Activated CD4-positive, alpha-beta T cell treated with anti-CD3 and anti-CD28 coated beads, Interleukin-2, amount 10 ng/mL, durations not matched to agents 24 days and 14 days (primary cell): ENCODE measurements at regions of chr6 and their contacts with region 1.

Region 1: GRCh38 chr6:1609648-1610496 is at the start of gene FOXC1:
- DNase-seq: peak; percentile 83
- H3K4me3 Mint-ChIP-seq: peak within 1 kb of the TSS; percentile 75
- H3K27ac Mint-ChIP-seq: peak within 1 kb of the TSS; percentile 80
- H3K4me1 Mint-ChIP-seq: peaks cover 23% of the 10 kb centered on the region
- H3K27me3 Mint-ChIP-seq: peaks cover 62% of the 10 kb centered on the region
- total RNA-seq, gene FOXC1: 0.07 TPM in 2 replicates

Region 2: GRCh38 chr6:1311400-1312202 is 298.3 kb before region 1 on chr6 and contains the start of gene FOXQ1:
- intact Hi-C with region 1: loop called (anchors 5 kb)
- DNase-seq: peak; percentile 64
- H3K4me3 Mint-ChIP-seq: peak within 1 kb of the TSS; percentile 62
- H3K27ac Mint-ChIP-seq: peak within 1 kb of the TSS; percentile 82
- H3K4me1 Mint-ChIP-seq: peaks cover 14% of the 10 kb centered on the region
- H3K27me3 Mint-ChIP-seq: peaks cover 73% of the 10 kb centered on the region
- total RNA-seq, gene FOXQ1: not detected in 2 replicates

Region 3: DNA sequence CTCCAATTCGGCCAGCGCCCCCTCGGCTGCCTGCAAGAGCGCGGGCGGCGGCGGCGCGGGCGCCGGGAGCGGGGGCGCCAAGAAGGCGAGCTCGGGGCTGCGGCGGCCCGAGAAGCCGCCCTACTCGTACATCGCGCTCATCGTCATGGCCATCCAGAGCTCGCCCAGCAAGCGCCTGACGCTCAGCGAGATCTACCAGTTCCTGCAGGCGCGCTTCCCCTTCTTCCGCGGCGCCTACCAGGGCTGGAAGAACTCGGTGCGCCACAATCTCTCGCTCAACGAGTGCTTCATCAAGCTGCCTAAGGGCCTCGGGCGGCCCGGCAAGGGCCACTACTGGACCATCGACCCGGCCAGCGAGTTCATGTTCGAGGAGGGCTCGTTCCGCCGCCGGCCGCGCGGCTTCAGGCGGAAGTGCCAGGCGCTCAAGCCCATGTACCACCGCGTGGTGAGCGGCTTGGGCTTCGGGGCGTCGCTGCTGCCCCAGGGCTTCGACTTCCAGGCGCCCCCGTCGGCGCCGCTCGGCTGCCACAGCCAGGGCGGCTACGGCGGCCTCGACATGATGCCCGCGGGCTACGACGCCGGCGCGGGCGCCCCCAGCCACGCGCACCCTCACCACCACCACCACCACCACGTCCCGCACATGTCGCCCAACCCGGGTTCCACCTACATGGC is 219.6 kb before region 1 on chr6:
- intact Hi-C with region 1: loop called (anchors 5 kb)
- DNase-seq: no peak
- H3K4me3 Mint-ChIP-seq: peak overlapping the region; percentile 66
- H3K27ac Mint-ChIP-seq: peak overlapping the region; percentile 79
- H3K4me1 Mint-ChIP-seq: peaks cover 12% of the 10 kb centered on the region
- H3K27me3 Mint-ChIP-seq: peaks cover 76% of the 10 kb centered on the region

Region 4: GRCh38 chr6:1625794-1626435 is 16.0 kb after region 1 on chr6:
- intact Hi-C with region 1: loop called (anchors 1 kb)
- DNase-seq: no peak
- H3K4me3 Mint-ChIP-seq: peak overlapping the region; percentile 72
- H3K27ac Mint-ChIP-seq: no peak overlapping the region
- H3K4me1 Mint-ChIP-seq: peaks cover 6% of the 10 kb centered on the region
- H3K27me3 Mint-ChIP-seq: peaks cover 68% of the 10 kb centered on the region

Region 5: GRCh38 chr6:1645470-1646185 is 35.8 kb after region 1 on chr6:
- intact Hi-C with region 1: no loop called
- DNase-seq: no peak
- H3K4me3 Mint-ChIP-seq: no peak overlapping the region
- H3K27ac Mint-ChIP-seq: no peak overlapping the region
- H3K4me1 Mint-ChIP-seq: no peaks in the 10 kb centered on the region
- H3K27me3 Mint-ChIP-seq: no peaks in the 10 kb centered on the region

Region 6: GRCh38 chr6:2563635-2564034 is 953.8 kb after region 1 on chr6:
- intact Hi-C with region 1: loop called (anchors 10 kb)
- DNase-seq: peak; percentile 73
- H3K4me3 Mint-ChIP-seq: peak overlapping the region; percentile 44
- H3K27ac Mint-ChIP-seq: no peak overlapping the region
- H3K4me1 Mint-ChIP-seq: peaks cover 13% of the 10 kb centered on the region
- H3K27me3 Mint-ChIP-seq: peaks cover 78% of the 10 kb centered on the region

Region 7: DNA sequence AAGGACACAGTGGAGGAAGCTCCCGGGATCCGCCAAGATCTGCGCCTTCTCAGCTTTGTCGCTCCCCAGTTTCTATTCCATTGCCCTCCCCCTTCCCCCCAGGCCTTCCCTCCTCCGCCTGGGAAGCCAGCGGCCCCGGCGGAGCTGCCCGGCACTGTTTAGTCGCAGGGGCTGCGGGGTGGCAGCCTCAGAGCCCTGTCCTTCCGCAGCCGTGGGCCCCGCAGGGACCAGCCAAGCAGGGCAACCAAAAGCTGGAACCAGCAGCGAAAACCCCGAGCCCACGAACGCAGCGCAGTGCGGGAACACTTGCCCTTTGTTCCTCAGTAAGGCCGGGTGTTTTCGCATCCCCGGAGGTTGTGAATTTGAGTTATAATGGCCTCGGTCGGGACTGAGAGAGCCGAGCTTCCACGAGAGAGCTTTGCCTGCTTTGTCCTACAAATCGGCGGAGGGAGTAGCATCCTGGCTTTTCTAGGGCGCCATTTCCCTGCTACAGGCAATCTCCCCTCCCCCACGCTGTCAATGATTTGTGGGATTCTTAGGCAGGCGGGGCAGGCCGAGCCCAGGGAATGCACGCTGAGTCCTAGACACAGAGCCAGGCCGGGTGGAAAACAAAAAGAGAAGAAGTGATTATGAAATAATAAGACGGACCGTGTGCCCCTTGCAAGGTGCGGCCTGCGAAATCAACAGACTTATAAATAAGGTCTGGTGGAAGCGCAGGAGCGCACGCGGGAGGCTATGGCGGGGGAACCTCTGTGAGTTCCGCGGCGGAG is 1621.6 kb after region 1 on chr6:
- intact Hi-C with region 1: loop called (anchors 5 kb)
- DNase-seq: no peak
- H3K4me3 Mint-ChIP-seq: peak overlapping the region; percentile 47
- H3K27ac Mint-ChIP-seq: no peak overlapping the region
- H3K4me1 Mint-ChIP-seq: peaks cover 26% of the 10 kb centered on the region
- H3K27me3 Mint-ChIP-seq: peaks cover 81% of the 10 kb centered on the region